Activated B cell treated with CpG ODN at 0.5 μM for 24 hours (primary cell): ENCODE measurements at regions of chr10 and their contacts with region 1.

Region 1: DNA sequence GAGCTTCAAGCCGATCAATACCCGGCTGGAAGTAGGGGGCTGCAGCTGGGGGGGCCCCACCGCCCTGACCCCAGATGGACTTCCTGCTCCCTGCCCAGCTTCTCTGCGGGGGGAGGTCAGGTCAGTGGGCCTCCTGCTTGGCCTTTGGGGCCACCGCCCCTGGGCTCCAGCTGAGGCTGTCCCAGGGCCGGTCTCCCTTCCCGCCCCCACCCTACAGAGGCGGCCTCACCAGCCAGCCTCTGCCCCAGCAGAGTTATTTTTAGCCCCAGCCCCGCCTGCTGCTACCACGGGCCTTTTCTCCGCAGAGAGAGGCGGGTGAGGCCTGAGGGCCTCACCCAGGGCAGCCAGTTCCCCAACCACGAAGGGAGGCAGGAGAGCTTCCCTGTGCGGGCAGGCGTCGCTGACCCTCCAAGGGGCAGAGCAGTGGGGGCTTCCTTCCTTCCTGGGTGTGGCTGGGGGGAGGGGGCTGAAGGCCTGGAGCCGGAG is 24.4 kb downstream of the PWWP2B start:
- DNase-seq: no peak
- ATAC-seq: peak; percentile 46
- H3K4me3 Mint-ChIP-seq: peak overlapping the region; percentile 38
- H3K27ac Mint-ChIP-seq: peak overlapping the region; percentile 86
- H3K4me1 Mint-ChIP-seq: peaks cover 61% of the 10 kb centered on the region
- H3K27me3 Mint-ChIP-seq: no peaks in the 10 kb centered on the region
- CTCF ChIP-seq: no peak

Region 2: DNA sequence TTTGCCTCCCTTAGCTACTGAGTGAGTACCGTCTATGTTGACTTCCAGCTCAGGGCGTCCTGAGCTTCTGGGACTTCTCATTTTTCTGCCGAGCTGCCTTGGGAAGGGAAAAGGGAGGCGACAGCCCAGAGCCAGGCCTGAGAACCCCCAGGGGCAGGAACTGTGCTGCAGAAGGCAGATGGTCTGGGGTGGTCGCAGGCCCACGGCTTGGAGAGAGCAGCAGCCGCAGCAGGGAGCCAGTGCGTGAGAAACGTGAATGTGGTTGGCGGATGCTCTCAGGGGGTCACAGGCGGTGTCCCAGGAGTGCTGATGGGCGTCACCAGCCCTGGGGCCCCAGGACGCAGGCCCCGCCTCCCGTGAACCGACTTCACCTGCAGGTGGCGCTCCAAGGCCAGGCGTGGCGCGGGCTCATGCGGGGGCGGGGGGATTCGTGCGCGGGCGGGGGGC is 33.6 kb before region 1 on chr10:
- CTCF ChIA-PET with region 1: no interaction called
- POLR2A ChIA-PET with region 1: interaction called, 3 read pairs
- intact Hi-C with region 1: loop called (anchors 5 kb)
- DNase-seq: peak; percentile 83
- ATAC-seq: peak; percentile 98
- H3K4me3 Mint-ChIP-seq: peak overlapping the region; percentile 80
- H3K27ac Mint-ChIP-seq: peak overlapping the region; percentile 85
- H3K4me1 Mint-ChIP-seq: peaks cover 7% of the 10 kb centered on the region
- H3K27me3 Mint-ChIP-seq: no peaks in the 10 kb centered on the region
- CTCF ChIP-seq: no peak

Region 3: DNA sequence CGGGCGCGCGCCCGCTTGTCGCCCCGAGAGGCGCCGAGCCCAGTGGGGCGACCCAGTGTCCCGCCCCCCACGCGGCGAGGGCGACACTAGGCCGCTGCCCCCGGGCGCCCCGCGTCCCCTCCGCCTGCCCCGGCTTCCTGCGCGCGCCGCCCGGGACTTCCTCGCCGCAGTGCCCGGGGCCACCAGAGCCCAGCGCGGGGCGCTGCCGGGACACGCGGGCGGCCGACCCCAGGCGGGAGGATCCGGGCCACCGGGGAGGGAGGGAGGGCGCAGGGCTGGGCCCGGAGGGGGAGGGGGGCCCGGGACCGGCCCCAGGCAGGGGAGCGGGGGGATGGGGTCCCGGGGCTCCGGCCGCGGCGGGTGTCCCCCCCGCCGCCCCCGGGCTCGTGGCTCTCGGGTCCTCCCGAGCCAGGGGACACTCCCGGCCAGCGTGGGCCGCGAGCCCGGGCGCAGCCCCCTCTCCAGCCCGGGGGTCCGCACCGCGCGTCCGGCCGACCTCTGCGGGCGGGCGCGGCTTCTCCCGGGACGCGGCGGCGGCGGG is 24.9 kb before region 1 on chr10:
- CTCF ChIA-PET with region 1: no interaction called
- POLR2A ChIA-PET with region 1: interaction called, 41 read pairs
- intact Hi-C with region 1: loop called (anchors 1 kb)
- DNase-seq: peak; percentile 74
- ATAC-seq: peak; percentile 71
- H3K4me3 Mint-ChIP-seq: no peak overlapping the region
- H3K27ac Mint-ChIP-seq: no peak overlapping the region
- H3K4me1 Mint-ChIP-seq: peaks cover 59% of the 10 kb centered on the region
- H3K27me3 Mint-ChIP-seq: no peaks in the 10 kb centered on the region
- CTCF ChIP-seq: no peak

Region 4: GRCh38 chr10:132434405-132435005 is 13.1 kb after region 1 on chr10:
- CTCF ChIA-PET with region 1: no interaction called
- POLR2A ChIA-PET with region 1: interaction called, 8 read pairs
- intact Hi-C with region 1: loop called (anchors 1 kb)
- DNase-seq: no peak
- ATAC-seq: peak; percentile 87
- H3K4me3 Mint-ChIP-seq: peak overlapping the region; percentile 69
- H3K27ac Mint-ChIP-seq: peak overlapping the region; percentile 41
- H3K4me1 Mint-ChIP-seq: peaks cover 21% of the 10 kb centered on the region
- H3K27me3 Mint-ChIP-seq: no peaks in the 10 kb centered on the region
- CTCF ChIP-seq: no peak

Region 5: GRCh38 chr10:132446661-132447194 is 25.3 kb after region 1 on chr10:
- CTCF ChIA-PET with region 1: interaction called, 15 read pairs
- POLR2A ChIA-PET with region 1: interaction called, 40 read pairs
- intact Hi-C with region 1: loop called (anchors 1 kb)
- DNase-seq: peak; percentile 48
- ATAC-seq: peak; percentile 65
- H3K4me3 Mint-ChIP-seq: no peak overlapping the region
- H3K27ac Mint-ChIP-seq: peak overlapping the region; percentile 96
- H3K4me1 Mint-ChIP-seq: peaks cover 48% of the 10 kb centered on the region
- H3K27me3 Mint-ChIP-seq: no peaks in the 10 kb centered on the region
- CTCF ChIP-seq: no peak

Region 6: DNA sequence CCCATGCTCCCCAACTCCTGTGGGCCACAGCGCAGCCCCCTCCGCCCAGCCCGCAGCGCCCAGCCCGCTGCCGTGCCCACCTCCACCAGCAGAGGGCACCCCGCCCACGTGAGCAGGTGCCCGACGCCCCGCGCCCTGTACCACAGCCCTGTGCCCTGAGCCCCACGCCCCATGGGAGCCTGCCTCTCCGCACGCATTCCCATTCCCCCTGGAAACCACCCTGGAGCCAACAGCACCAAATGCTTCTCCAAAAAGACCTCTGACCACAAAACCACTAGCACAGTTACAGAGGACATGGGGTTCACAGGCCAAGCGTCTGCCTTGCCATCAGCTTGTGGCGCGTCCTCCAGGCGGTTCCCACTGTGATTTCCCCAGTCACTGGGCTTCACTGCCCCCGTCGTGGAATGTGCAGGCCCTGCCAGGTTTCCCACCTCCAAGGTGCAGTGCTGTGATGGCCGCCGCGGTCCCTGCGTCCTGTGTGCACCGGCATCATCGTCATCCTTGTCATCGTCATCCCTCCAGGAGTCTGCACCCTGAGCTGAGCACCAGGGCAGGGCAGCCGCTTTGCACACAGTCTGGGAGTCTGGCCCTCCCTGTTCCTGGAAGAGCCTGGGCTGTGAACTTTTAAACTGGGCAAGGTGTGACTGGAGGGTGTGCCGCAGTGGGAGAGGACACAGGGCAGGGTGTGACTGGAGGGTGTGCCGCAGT is 37.3 kb after region 1 on chr10:
- CTCF ChIA-PET with region 1: no interaction called
- POLR2A ChIA-PET with region 1: no interaction called
- intact Hi-C with region 1: no loop called
- DNase-seq: peak; percentile 80
- ATAC-seq: peak; percentile 94
- H3K4me3 Mint-ChIP-seq: no peak overlapping the region
- H3K27ac Mint-ChIP-seq: no peak overlapping the region
- H3K4me1 Mint-ChIP-seq: peaks cover 3% of the 10 kb centered on the region
- H3K27me3 Mint-ChIP-seq: no peaks in the 10 kb centered on the region
- CTCF ChIP-seq: no peak

Region 7: DNA sequence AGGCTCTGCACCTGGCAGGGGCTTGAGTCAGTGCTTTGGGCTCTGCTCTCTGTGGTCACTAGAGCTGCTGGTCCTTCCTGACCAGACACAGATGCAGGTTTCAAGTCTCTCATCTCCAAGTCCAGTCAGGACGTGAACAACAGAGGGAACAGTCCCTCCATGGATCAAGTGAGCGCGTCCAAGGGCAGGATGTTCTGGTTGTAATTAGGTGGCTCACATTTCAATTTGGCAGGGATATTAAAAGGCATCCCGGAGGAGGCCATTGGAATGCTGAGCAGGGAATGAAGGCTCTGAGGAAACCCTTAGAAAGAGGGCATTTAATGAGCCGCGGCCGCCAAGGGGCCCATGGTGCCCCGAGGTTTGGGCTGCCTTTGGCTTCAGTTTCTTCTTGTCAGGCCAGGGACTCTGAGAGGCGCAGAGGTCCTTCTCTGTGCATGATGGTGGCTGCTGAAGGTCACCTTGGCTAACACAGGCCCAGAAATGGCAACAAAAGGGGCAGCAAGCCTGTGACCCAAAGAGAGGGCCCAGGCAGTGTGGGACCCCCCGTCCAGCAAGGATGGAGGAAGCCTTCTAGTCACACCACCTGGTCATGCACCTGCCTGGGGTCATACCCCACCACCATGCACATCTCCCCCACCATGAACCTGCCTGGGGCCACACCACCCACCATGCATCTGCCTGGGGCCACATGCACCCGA is 85.4 kb after region 1 on chr10:
- CTCF ChIA-PET with region 1: no interaction called
- POLR2A ChIA-PET with region 1: no interaction called
- intact Hi-C with region 1: no loop called
- DNase-seq: peak; percentile 7
- ATAC-seq: no peak
- H3K4me3 Mint-ChIP-seq: no peak overlapping the region
- H3K27ac Mint-ChIP-seq: no peak overlapping the region
- H3K4me1 Mint-ChIP-seq: no peaks in the 10 kb centered on the region
- H3K27me3 Mint-ChIP-seq: no peaks in the 10 kb centered on the region
- CTCF ChIP-seq: no peak